ENCODE measurements at regions of chr3 and their contacts with region 1.

Region 1: DNA sequence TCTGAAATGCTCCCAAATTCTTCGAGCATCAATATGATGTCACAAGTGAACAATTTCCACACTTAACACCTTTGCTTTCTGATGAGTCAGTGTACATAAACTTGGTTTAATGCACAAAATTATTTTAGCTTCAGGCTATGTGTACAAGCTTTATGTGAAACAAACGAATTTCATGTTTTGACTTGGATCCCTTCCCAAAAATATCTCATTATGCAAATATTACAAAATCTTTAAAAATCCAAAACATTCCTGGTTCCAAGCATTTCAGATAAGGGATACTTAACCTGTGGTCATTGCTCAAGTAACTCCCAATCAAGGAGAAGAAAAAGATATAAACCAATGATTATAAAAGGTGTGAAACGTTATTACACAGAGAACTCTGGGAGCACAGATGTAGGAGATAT is 25.2 kb downstream of the RAB5A start:
- DNase-seq: no peak
- ATAC-seq: no peak
- H3K4me3 ChIP-seq: no peak overlapping the region
- H3K27ac ChIP-seq: no peak overlapping the region
- H3K4me1 ChIP-seq: peaks cover 0 to 30% (median 11%) of the 10 kb centered on the region in 12 donors
- H3K27me3 ChIP-seq: no peaks in the 10 kb centered on the region
- CTCF ChIP-seq: no peak
- POLR2A ChIP-seq: no peak

Region 2: GRCh38 chr3:20023623-20024405 is 51.8 kb after region 1 on chr3:
- intact Hi-C with region 1: loop called in 1 of 10 experiments (anchors 5 kb)
- DNase-seq: peak in 4 of 5 donors; percentile 41 to 65 (median 59)
- ATAC-seq: peak; percentile 81 to 98 (median 88)
- H3K4me3 ChIP-seq: no peak overlapping the region
- H3K27ac ChIP-seq: peak overlapping the region; percentile 18 to 68 (median 52)
- H3K4me1 ChIP-seq: peaks cover 4 to 30% (median 17%) of the 10 kb centered on the region in 12 donors
- H3K27me3 ChIP-seq: no peaks in the 10 kb centered on the region
- CTCF ChIP-seq: no peak
- POLR2A ChIP-seq: no peak

Region 3: GRCh38 chr3:21256932-21257331 is 1284.9 kb after region 1 on chr3:
- intact Hi-C with region 1: no loop called
- DNase-seq: no peak
- ATAC-seq: no peak
- H3K4me3 ChIP-seq: no peak overlapping the region
- H3K27ac ChIP-seq: no peak overlapping the region
- H3K4me1 ChIP-seq: peaks cover 0 to 9% (median 2%) of the 10 kb centered on the region in 12 donors
- H3K27me3 ChIP-seq: no peaks in the 10 kb centered on the region
- CTCF ChIP-seq: no peak
- POLR2A ChIP-seq: no peak